ENCODE measurements at regions of chr10 and their contacts with region 1.

Region 1: DNA sequence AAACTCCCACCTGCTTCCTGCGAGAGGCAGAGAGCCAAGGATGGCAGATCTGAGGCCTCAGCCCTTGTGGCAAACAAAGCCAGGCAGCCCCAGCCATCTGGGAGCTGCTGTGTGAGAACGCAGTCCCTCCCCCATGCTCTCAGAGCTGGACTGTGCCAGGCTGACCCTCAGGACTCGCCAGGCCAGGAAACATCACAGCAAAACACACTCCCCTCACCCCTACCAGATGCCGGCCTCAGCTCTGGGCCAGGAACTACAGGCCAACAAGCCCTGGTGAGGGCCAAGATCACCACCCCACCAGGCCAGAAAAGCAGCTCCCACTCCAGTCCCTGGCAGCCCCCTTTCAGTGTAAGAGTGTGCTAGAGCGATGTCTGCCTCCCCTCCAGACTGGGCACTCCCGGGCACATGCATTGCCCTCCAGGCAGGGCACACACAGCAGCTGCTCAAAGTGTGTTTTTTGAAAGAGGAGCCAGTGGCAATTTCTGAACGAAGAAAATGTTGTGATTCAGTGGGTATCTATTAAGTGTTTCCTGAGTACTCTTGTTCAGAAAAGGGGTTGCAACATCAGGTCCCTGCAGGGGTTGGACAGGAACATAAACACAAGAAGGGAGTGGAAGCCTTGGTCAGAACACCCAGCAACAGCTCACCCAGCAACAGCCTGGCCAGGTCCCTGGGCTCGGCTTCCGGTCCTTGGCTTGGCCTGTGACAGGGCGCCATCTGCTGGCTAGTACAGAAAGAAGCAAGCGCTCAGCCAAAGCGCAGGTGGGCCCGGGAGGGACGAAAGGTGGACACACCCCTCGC is 18.3 kb downstream of the LRRC20 start:
- DNase-seq: peak; percentile 80 to 88
- ATAC-seq: peak; percentile 99
- H3K4me3 ChIP-seq: no peak overlapping the region
- H3K27ac ChIP-seq: peak overlapping the region; percentile 66 to 86
- H3K4me1 ChIP-seq: peaks cover 19% of the 10 kb centered on the region
- CTCF ChIP-seq: peak; percentile 88
- EP300 ChIP-seq: no peak
- POLR2A ChIP-seq: no peak
- RAD21 ChIP-seq: peak; percentile 97

Region 2: DNA sequence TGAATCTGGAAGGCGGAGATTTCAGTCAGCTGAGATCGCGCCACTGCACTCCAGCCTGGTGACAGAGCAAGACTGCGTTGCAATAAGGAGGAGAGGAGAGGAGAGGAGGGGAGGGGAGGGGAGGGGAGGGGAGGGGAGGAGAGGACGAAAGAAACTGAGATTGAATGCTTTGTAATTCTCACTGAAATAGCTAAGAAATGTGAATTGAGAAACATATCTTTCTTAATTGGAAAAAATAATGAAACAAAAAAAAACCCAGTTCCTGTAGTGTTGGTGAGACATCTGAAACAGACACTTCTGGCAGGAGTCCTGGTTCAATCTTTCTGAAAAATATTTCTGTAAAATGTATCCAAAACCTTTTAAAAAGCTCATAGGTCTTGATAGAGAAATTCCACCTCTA is 157.4 kb before region 1 on chr10:
- CTCF ChIA-PET with region 1: interaction called, 10 read pairs
- POLR2A ChIA-PET with region 1: no interaction called
- DNase-seq: no peak
- ATAC-seq: no peak
- H3K4me3 ChIP-seq: no peak overlapping the region
- H3K27ac ChIP-seq: no peak overlapping the region
- H3K4me1 ChIP-seq: no peaks in the 10 kb centered on the region
- CTCF ChIP-seq: no peak
- EP300 ChIP-seq: no peak
- POLR2A ChIP-seq: no peak
- RAD21 ChIP-seq: no peak

Region 3: DNA sequence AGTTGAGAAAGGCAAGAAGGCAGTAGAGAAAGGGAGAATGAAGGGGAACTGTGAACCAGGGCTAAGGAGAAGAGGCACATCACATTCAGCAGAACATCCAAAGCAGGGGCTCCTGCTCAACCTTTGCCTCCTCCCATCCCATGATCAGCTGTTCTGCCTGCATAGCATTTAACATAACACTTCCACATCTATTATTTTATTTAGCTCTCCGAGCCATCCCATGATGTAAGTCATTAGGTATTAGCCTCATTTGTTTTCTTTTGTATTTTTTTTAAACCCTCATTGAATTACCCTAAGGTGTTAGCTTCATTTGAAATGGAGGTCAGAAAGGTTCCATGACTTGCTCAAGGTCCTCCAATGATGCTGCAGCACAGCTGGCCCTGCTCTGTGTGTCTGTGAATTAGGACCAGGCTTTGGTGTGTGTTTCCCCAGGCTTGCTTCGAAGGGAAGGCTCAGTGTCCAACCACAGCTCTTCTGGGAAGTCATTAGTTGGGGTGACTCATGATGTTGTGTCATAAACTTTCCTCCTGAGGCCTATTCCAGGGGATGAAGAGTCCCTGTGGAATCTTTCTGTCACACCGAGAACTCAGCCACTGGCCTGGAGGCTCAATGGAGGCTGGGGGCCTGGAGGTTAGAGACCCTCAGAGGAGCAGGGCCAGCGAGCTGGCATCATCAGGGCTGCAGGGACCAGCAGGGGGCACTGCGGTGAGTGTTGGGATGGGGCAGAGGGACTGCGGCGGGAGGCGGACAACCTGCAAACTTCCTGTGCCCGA is 96.8 kb before region 1 on chr10:
- CTCF ChIA-PET with region 1: interaction called, 33 read pairs
- POLR2A ChIA-PET with region 1: no interaction called
- DNase-seq: peak; percentile 54 to 73
- ATAC-seq: peak; percentile 83 to 85
- H3K4me3 ChIP-seq: no peak overlapping the region
- H3K27ac ChIP-seq: peak overlapping the region in 1 of 2 experiments; percentile 32; a peak in 1 of 6 replicates
- H3K4me1 ChIP-seq: peaks cover 12% of the 10 kb centered on the region
- CTCF ChIP-seq: peak; percentile 25; the same call in 2 of the 3 replicates
- EP300 ChIP-seq: no peak
- POLR2A ChIP-seq: no peak
- RAD21 ChIP-seq: no peak

Region 4: GRCh38 chr10:70296406-70296899 is 67.7 kb before region 1 on chr10:
- CTCF ChIA-PET with region 1: interaction called, 11 read pairs
- POLR2A ChIA-PET with region 1: no interaction called
- DNase-seq: peak; percentile 31 to 45
- ATAC-seq: peak; percentile 77 to 88
- H3K4me3 ChIP-seq: no peak overlapping the region
- H3K27ac ChIP-seq: peak overlapping the region in 1 of 2 experiments; percentile 36; a peak in 2 of 6 replicates
- H3K4me1 ChIP-seq: peaks cover 6% of the 10 kb centered on the region; the same call in 1 of the 3 replicates
- CTCF ChIP-seq: no peak
- EP300 ChIP-seq: no peak
- POLR2A ChIP-seq: no peak
- RAD21 ChIP-seq: no peak

Region 5: DNA sequence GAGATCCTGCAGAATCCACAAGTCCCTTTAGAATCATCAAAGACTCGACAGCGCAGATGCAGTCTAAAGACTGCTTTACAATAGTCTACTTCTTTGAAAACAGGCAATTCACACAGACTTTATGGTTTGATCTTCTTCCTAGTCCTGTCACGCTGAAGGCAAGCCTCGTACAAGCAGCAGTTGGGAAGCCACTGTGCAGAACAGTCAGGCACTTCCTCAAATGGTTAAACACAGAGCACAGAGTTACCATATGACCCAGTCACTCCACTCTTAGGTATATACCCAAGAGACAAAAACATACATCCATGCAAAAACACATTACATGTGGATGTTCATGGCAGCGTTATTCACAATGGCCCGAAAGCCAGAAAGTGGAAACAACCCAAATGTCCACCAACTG is 23.2 kb before region 1 on chr10:
- CTCF ChIA-PET with region 1: interaction called, 21 read pairs
- POLR2A ChIA-PET with region 1: no interaction called
- DNase-seq: no peak
- ATAC-seq: no peak
- H3K4me3 ChIP-seq: no peak overlapping the region
- H3K27ac ChIP-seq: no peak overlapping the region
- H3K4me1 ChIP-seq: peaks cover 9% of the 10 kb centered on the region
- CTCF ChIP-seq: no peak
- EP300 ChIP-seq: no peak
- POLR2A ChIP-seq: no peak
- RAD21 ChIP-seq: no peak

Region 6: DNA sequence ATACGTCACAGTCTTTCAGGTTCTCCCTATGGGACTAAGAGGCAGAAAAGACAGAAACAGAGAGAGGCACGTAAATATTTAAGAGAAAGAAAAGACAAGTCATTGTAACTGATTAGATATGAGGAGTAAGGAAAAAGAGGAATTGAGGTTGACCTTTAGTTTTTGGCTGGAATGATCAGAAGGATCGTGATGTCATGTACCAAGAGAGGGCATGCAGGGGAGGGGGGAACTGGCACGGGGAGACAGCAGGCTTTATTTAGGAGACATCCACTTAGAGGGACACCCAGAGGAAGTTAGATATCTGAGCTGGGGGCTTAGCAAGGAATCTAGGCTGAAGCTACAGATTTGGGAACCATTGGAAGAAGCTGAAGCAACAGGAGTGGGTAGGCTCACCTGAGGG is 27.5 kb after region 1 on chr10:
- CTCF ChIA-PET with region 1: interaction called, 69 read pairs
- POLR2A ChIA-PET with region 1: no interaction called
- DNase-seq: no peak
- ATAC-seq: no peak
- H3K4me3 ChIP-seq: no peak overlapping the region
- H3K27ac ChIP-seq: no peak overlapping the region
- H3K4me1 ChIP-seq: no peaks in the 10 kb centered on the region; the same call in 2 of the 3 replicates
- CTCF ChIP-seq: no peak
- EP300 ChIP-seq: no peak
- POLR2A ChIP-seq: no peak
- RAD21 ChIP-seq: no peak

Region 7: DNA sequence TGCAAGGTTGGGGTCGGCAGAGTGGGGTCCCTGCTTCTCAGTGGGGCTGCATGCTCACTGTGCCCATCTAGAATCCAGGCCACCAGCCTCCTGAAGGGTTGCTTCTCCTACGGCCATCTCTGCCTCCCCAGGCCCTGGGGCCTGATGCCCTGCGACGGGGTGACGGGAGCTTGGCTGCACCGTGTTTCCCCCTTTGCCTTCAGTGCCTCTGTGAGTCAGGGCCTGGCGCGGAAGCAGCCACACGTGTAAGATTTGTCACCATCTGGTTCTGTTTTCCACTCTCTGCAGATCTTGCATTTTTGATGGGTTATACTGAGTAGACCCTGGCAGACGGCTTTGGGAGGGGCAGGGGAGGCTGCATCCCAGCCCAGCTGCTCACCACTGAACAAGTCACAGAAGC is 315.3 kb after region 1 on chr10:
- CTCF ChIA-PET with region 1: no interaction called
- POLR2A ChIA-PET with region 1: no interaction called
- DNase-seq: no peak
- ATAC-seq: no peak
- H3K4me3 ChIP-seq: no peak overlapping the region
- H3K27ac ChIP-seq: no peak overlapping the region
- H3K4me1 ChIP-seq: no peaks in the 10 kb centered on the region
- CTCF ChIP-seq: no peak
- EP300 ChIP-seq: no peak
- POLR2A ChIP-seq: no peak
- RAD21 ChIP-seq: no peak

Measured in A549 (cell line).